ENCODE measurements at regions of chr11 and their contacts with region 1.

Region 1: GRCh38 chr11:108593214-108593922 is at the start of gene EXPH5:
- DNase-seq: peak; percentile 62 to 89 (median 87)
- ATAC-seq: peak; percentile 97
- H3K4me3 ChIP-seq: peak within 1 kb of the TSS; percentile 75
- H3K4me3 Mint-ChIP-seq: peak within 1 kb of the TSS; percentile 90 to 100 (median 97)
- H3K27ac ChIP-seq: peak within 1 kb of the TSS; percentile 81
- H3K27ac Mint-ChIP-seq: peak within 1 kb of the TSS; percentile 79 to 98 (median 95)
- H3K4me1 ChIP-seq: peaks cover 0 to 13% of the 10 kb centered on the region in 2 donors
- H3K4me1 Mint-ChIP-seq: peaks cover 12 to 27% (median 22%) of the 10 kb centered on the region in 7 donors
- H3K27me3 ChIP-seq: no peaks in the 10 kb centered on the region
- H3K27me3 Mint-ChIP-seq: peaks cover 0 to 60% (median 0%) of the 10 kb centered on the region in 5 donors
- total RNA-seq, gene EXPH5: 1.9 to 8.3 (median 5.9) TPM

Region 2: GRCh38 chr11:107858217-107859070 is 734.9 kb before region 1 on chr11 and contains the start of gene SLC35F2:
- CTCF ChIA-PET with region 1: no interaction called
- POLR2A ChIA-PET with region 1: no interaction called
- intact Hi-C with region 1: loop called in 1 of 2 experiments (anchors 2 kb)
- DNase-seq: peak; percentile 15 to 81 (median 45)
- ATAC-seq: peak; percentile 88
- H3K4me3 ChIP-seq: peak within 1 kb of the TSS; percentile 88
- H3K4me3 Mint-ChIP-seq: peak within 1 kb of the TSS; percentile 89 to 98 (median 95)
- H3K27ac ChIP-seq: peak within 1 kb of the TSS; percentile 65
- H3K27ac Mint-ChIP-seq: peak within 1 kb of the TSS; percentile 21 to 88 (median 77)
- H3K4me1 ChIP-seq: no peaks in the 10 kb centered on the region
- H3K4me1 Mint-ChIP-seq: peaks cover 5 to 33% (median 26%) of the 10 kb centered on the region in 7 donors
- H3K27me3 ChIP-seq: no peaks in the 10 kb centered on the region
- H3K27me3 Mint-ChIP-seq: peaks cover 0 to 17% (median 4%) of the 10 kb centered on the region in 5 donors
- total RNA-seq, gene SLC35F2: 3.8 to 8.9 (median 4.5) TPM

Region 3: GRCh38 chr11:108237058-108237481 is 356.3 kb before region 1 on chr11:
- CTCF ChIA-PET with region 1: no interaction called
- POLR2A ChIA-PET with region 1: no interaction called
- intact Hi-C with region 1: loop called in 1 of 2 experiments (anchors 5 kb)
- DNase-seq: peak in 4 of 9 donors; percentile 31 to 63 (median 50)
- ATAC-seq: peak; percentile 51
- H3K4me3 ChIP-seq: peak overlapping the region; percentile 50
- H3K4me3 Mint-ChIP-seq: peak overlapping the region in 9 of 10 donors; percentile 54 to 89 (median 82)
- H3K27ac ChIP-seq: peak overlapping the region; percentile 74
- H3K27ac Mint-ChIP-seq: peak overlapping the region in 7 of 9 donors; percentile 81 to 97 (median 95)
- H3K4me1 ChIP-seq: peaks cover 75 to 94% of the 10 kb centered on the region in 2 donors
- H3K4me1 Mint-ChIP-seq: peaks cover 53 to 95% (median 79%) of the 10 kb centered on the region in 7 donors
- H3K27me3 ChIP-seq: no peaks in the 10 kb centered on the region
- H3K27me3 Mint-ChIP-seq: no peaks in the 10 kb centered on the region

Region 4: GRCh38 chr11:108340970-108341369 is 252.4 kb before region 1 on chr11:
- CTCF ChIA-PET with region 1: no interaction called
- POLR2A ChIA-PET with region 1: no interaction called
- intact Hi-C with region 1: loop called in 1 of 2 experiments (anchors 5 kb)
- DNase-seq: no peak
- ATAC-seq: no peak
- H3K4me3 ChIP-seq: no peak overlapping the region
- H3K4me3 Mint-ChIP-seq: no peak overlapping the region
- H3K27ac ChIP-seq: no peak overlapping the region
- H3K27ac Mint-ChIP-seq: peak overlapping the region in 5 of 9 donors; percentile 1 to 59 (median 22)
- H3K4me1 ChIP-seq: no peaks in the 10 kb centered on the region
- H3K4me1 Mint-ChIP-seq: peaks cover 9 to 48% (median 29%) of the 10 kb centered on the region in 7 donors
- H3K27me3 ChIP-seq: no peaks in the 10 kb centered on the region
- H3K27me3 Mint-ChIP-seq: no peaks in the 10 kb centered on the region

Region 5: DNA sequence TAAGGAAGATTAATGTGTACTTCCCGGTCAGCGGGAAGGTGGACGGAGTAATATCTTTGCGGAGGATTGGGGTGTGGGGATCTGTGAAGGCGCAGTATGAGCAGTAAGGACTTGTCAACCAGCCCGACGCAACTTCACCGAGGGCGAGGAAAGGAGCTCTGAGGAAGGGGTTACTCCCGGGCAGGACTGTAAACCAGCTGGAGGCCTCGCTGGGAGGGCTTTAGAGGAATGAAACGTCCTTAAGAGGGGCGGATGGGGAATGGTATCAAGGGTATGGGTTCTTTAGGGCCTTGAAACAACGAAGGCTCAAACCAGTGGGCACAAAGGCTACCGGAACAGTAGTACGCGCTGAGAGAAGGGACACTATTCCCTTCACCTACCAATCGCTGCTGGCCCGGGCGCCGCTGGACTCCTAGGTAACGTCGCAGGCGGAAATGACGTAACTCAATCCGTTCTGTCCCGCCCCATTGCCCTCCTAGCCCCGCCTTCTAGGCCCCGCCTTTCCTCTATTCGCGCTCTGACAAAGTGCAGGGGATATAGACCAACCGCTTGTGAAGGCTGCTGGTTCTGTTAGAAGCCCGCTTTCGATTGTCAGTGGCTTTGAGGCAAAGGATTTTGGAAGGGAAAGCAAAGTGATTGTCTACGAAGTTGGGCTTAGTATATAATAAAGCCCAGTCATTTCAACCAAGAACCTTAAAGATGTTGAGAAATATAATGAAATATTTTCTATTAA is 126.1 kb before region 1 on chr11 and contains the start of gene C11orf65:
- CTCF ChIA-PET with region 1: no interaction called
- POLR2A ChIA-PET with region 1: interaction called, 11 read pairs
- intact Hi-C with region 1: loop called (anchors 1 kb)
- DNase-seq: peak; percentile 88 to 97 (median 94)
- ATAC-seq: peak; percentile 98
- H3K4me3 ChIP-seq: peak within 1 kb of the TSS; percentile 81
- H3K4me3 Mint-ChIP-seq: peak within 1 kb of the TSS; percentile 93 to 100 (median 98)
- H3K27ac ChIP-seq: peak within 1 kb of the TSS; percentile 93
- H3K27ac Mint-ChIP-seq: peak within 1 kb of the TSS; percentile 98 to 100 (median 100)
- H3K4me1 ChIP-seq: peaks cover 3 to 5% of the 10 kb centered on the region in 2 donors
- H3K4me1 Mint-ChIP-seq: peaks cover 0 to 27% (median 17%) of the 10 kb centered on the region in 7 donors
- H3K27me3 ChIP-seq: no peaks in the 10 kb centered on the region
- H3K27me3 Mint-ChIP-seq: no peaks in the 10 kb centered on the region
- total RNA-seq, gene C11orf65: 0.27 to 1.5 (median 0.51) TPM

Region 6: DNA sequence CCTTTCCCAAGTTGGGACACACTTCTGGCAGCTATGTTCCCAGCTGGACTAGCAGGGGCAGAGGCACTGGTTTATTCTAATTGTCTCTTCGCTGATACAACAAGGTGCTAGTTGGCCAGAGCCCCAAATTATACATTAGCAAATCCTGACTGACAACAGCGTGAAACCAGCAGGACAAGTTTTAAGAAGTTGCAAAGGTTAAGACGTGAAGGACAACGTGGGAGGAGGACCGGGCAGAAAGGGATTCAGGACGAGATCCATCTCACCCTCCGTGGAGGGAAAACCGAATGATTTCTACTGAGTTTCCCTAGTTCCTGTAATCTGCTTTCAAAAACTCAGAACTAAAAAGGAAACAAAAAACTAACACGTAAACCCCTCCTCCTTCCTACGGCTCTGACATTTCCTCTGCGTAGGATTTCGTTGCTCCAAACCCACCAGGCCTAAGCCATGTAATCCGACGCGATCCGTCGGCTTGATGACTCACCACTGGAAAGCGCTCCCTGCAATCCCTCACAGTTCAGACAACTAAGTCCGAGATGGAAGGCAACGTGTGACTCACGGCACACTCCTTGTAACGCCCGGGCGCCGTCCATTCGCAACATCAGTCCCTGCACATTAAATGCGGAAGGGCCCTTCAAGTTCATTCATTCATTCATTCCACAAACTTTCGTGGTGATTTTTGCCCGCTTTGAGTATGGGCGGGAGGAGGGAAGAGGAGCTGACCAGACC is 95.9 kb before region 1 on chr11:
- CTCF ChIA-PET with region 1: no interaction called
- POLR2A ChIA-PET with region 1: no interaction called
- intact Hi-C with region 1: loop called (anchors 1 kb)
- DNase-seq: peak in 8 of 9 donors; percentile 68 to 83 (median 76)
- ATAC-seq: peak; percentile 92
- H3K4me3 ChIP-seq: peak overlapping the region; percentile 77
- H3K4me3 Mint-ChIP-seq: peak overlapping the region; percentile 95 to 100 (median 98)
- H3K27ac ChIP-seq: peak overlapping the region; percentile 87
- H3K27ac Mint-ChIP-seq: peak overlapping the region; percentile 95 to 100 (median 99)
- H3K4me1 ChIP-seq: peaks cover 0 to 3% of the 10 kb centered on the region in 2 donors
- H3K4me1 Mint-ChIP-seq: peaks cover 8 to 33% (median 24%) of the 10 kb centered on the region in 7 donors
- H3K27me3 ChIP-seq: no peaks in the 10 kb centered on the region
- H3K27me3 Mint-ChIP-seq: no peaks in the 10 kb centered on the region

Region 7: GRCh38 chr11:108664730-108665525 is 71.6 kb after region 1 on chr11 and contains the start of gene DDX10:
- CTCF ChIA-PET with region 1: no interaction called
- POLR2A ChIA-PET with region 1: interaction called, 4 read pairs
- intact Hi-C with region 1: loop called (anchors 1 to 2 kb)
- DNase-seq: peak; percentile 95 to 99 (median 98)
- ATAC-seq: peak; percentile 99
- H3K4me3 ChIP-seq: peak within 1 kb of the TSS; percentile 80
- H3K4me3 Mint-ChIP-seq: peak within 1 kb of the TSS; percentile 91 to 100 (median 100)
- H3K27ac ChIP-seq: peak within 1 kb of the TSS; percentile 77
- H3K27ac Mint-ChIP-seq: peak within 1 kb of the TSS; percentile 79 to 100 (median 97)
- H3K4me1 ChIP-seq: peaks cover 18 to 22% of the 10 kb centered on the region in 2 donors
- H3K4me1 Mint-ChIP-seq: peaks cover 24 to 56% (median 47%) of the 10 kb centered on the region in 7 donors
- H3K27me3 ChIP-seq: no peaks in the 10 kb centered on the region
- H3K27me3 Mint-ChIP-seq: peaks cover 0 to 9% (median 0%) of the 10 kb centered on the region in 5 donors
- total RNA-seq, gene DDX10: 16.7 to 34.6 (median 22.8) TPM

Measured in naive thymus-derived CD4-positive, alpha-beta T cell (primary cell).